ENCODE measurements at regions of chr20 and their contacts with region 1.

Region 1: DNA sequence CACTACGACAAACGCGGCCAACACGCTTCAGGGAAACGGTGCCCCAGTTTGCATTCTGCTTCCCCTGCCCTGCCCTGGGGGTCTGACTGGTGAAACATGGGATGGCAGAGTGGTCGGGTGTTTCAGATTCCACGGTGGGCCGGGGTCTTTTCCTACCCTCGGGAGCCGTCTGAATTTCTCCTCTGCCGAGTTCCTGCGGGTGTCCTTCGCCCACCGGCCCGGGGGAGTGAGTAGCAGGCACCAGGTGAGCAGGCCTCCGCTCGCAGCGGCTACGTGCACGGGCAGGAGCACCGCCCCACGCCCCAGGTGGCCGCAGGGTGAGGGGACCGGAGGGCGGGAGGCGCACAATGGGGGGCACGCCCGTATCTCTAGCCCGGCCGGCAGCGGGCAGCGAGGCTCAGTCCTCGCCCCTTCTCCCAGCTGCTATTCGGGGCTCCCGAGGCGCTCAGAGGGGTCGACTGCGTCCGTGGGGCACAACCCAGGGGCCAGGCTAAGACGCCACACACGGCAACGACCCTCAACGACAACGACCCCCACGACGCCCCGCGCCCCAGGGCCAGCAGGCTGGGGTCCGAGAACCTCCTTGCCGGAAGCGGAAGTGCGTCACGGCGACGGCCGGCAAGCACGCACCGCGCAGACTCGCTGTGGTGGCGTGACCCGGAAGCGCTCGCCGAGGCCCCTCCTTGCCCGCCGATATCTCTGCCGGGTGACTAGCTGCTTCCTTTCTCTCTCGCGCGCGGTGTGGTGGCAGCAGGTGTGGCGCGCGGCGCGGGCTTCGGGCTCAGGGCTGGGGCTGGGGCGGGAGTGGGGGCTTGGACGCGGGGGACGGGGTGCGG is at the start of gene RPS21:
- DNase-seq: peak; percentile 91
- ATAC-seq: peak; percentile 82
- H3K4me3 ChIP-seq: peak within 1 kb of the TSS; percentile 100
- H3K27ac ChIP-seq: peak within 1 kb of the TSS; percentile 75
- H3K4me1 ChIP-seq: peaks cover 18% of the 10 kb centered on the region
- H3K27me3 ChIP-seq: no peaks in the 10 kb centered on the region
- CTCF ChIP-seq: no peak
- total RNA-seq, gene RPS21: 1,250 and 1,945 TPM in 2 replicates

Region 2: DNA sequence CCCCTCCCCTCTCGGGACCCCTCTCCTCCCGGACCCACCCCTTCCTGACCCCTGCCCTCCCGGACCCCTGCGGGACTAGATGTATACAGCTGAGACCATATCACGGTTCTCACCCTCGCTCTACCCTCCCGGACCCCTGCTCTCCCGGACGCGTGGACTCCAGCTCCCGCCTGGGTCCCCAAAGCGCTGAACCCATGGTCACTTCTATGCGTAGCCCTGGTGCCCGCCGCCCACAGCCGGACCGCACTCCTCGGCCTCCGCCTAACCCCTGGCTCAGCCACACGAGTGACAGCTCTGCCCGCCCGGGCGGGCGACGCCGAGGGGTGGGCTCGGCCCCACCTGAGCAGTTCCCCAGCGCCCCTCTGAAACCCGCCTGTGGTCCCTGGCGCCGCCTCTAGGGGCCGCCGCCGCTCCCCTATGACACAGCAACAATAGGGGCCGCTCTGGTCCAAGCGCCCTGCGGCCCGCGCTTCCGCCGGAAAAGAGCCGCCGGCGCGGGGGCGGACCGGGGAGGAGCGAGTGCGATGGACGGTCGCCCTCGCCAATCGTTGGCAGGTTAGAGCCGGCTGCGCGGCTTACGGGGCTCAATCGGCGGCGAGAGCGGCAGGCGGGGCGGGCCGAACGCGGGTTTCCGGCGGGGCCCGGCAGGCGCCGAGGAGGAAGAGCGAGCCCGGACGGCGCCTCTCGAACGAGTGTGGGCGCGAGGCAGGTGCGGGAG is 84.1 kb before region 1 on chr20 and contains the start of gene ADRM1:
- CTCF ChIA-PET with region 1: interaction called, 9 read pairs
- POLR2A ChIA-PET with region 1: interaction called, 8 read pairs
- intact Hi-C with region 1: loop called (anchors 1 kb)
- DNase-seq: peak; percentile 99
- ATAC-seq: peak; percentile 54
- H3K4me3 ChIP-seq: peak within 1 kb of the TSS; percentile 94
- H3K27ac ChIP-seq: peak within 1 kb of the TSS; percentile 95
- H3K4me1 ChIP-seq: peaks cover 25% of the 10 kb centered on the region
- H3K27me3 ChIP-seq: no peaks in the 10 kb centered on the region
- CTCF ChIP-seq: peak; percentile 89
- total RNA-seq, gene ADRM1: 374 and 487 TPM in 2 replicates

Region 3: DNA sequence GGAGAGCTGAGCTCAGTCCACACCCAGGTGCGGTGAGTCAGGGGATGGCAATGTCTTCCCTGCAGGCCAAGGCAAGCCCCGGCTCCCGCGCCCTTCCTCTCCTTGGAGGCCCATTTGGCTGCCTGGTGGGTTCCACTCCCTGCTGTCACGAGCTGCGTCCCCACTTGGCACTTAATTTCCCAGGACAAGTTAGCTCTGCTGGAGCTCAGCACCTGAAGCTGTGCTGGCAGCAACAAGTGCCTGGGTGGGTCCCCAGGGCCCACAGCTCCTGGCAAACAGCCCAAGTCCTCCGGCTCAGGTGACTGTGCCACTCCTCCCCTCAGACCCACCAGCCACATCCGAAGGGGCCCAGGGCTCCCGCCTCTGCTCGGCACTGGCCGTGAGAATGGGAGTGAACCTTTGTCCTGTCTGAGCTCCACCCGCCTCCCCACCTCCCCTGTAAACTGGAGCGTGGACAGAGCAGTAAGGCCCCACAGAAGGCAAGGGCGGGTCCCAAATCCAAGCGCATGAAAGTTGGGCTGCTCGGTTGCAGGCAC is 36.4 kb before region 1 on chr20:
- CTCF ChIA-PET with region 1: interaction called, 12 read pairs
- POLR2A ChIA-PET with region 1: interaction called, 13 read pairs
- intact Hi-C with region 1: loop called (anchors 1 kb)
- DNase-seq: peak; percentile 96
- ATAC-seq: peak; percentile 83
- H3K4me3 ChIP-seq: no peak overlapping the region
- H3K27ac ChIP-seq: peak overlapping the region; percentile 97
- H3K4me1 ChIP-seq: peaks cover 45% of the 10 kb centered on the region
- H3K27me3 ChIP-seq: no peaks in the 10 kb centered on the region
- CTCF ChIP-seq: no peak

Region 4: DNA sequence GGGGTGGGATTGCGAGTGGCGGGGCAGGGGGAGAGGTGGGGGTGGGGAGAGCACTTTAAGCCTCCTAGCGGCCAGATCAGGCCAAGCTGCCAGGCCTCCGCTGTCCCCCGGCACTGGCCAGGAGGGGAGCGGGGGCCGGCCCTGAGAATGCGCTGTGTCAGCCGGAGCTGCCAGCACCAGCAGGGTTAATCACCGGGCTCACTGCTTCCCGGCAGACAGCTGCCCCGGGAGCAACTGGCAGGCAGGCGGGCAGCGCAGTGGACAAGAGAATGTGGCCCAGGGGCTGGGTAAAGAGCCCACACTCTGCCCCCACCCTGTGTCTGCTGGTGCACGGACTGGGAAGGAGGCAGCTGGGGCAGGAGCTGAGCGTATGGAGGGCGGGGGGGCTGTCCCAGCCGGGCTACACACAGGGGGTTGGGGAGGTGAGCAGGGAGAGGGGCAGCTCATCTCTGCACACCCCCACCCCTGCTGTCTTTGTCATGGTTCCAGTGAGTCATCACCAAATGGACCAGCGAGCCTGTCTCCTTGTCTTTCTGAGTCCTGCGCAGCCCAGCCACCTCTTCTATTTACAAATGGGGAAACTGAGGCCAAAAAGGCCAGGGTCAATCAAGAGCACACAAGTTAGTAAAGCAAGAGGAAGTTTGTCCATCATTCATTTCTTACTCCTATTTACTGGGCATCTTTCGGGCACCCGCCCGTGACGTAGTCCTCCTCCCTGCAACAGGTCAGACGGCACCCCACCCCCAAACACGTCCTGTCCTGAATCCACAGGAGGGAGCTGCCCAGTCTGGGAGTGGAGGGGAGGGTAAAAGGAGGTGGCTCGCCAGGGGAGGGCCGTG is 17.4 kb before region 1 on chr20:
- CTCF ChIA-PET with region 1: interaction called, 18 read pairs
- POLR2A ChIA-PET with region 1: no interaction called
- intact Hi-C with region 1: no loop called
- DNase-seq: peak; percentile 61
- ATAC-seq: peak; percentile 12
- H3K4me3 ChIP-seq: peak overlapping the region; percentile 55
- H3K27ac ChIP-seq: peak overlapping the region; percentile 58
- H3K4me1 ChIP-seq: peaks cover 51% of the 10 kb centered on the region
- H3K27me3 ChIP-seq: no peaks in the 10 kb centered on the region
- CTCF ChIP-seq: peak; percentile 40; the same call in 1 of the 2 replicates

Region 5: DNA sequence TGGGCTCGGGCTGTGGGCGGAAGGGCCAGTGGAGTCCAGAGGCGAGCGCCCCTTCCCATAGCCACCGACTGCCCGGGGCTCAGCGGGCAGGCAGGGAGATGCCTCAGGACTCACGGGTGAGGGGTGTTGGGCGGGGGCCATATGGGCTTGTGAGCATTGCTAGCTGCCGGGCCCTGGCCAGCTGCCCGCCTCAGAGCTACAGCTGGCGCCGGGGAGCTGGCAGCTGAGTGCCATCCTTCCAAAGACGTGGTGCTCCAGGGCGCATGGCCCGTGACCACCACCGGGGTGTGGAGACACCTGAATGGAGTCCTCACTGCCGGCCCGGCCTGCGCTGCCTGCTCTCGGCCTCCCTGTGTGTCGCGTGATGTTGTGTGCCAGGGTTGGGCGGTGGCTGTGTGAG is 51.3 kb after region 1 on chr20:
- CTCF ChIA-PET with region 1: no interaction called
- POLR2A ChIA-PET with region 1: no interaction called
- intact Hi-C with region 1: no loop called
- DNase-seq: no peak
- ATAC-seq: no peak
- H3K4me3 ChIP-seq: no peak overlapping the region
- H3K27ac ChIP-seq: no peak overlapping the region
- H3K4me1 ChIP-seq: no peaks in the 10 kb centered on the region
- H3K27me3 ChIP-seq: peaks cover 12% of the 10 kb centered on the region; the same call in 1 of the 2 replicates
- CTCF ChIP-seq: no peak

Region 6: DNA sequence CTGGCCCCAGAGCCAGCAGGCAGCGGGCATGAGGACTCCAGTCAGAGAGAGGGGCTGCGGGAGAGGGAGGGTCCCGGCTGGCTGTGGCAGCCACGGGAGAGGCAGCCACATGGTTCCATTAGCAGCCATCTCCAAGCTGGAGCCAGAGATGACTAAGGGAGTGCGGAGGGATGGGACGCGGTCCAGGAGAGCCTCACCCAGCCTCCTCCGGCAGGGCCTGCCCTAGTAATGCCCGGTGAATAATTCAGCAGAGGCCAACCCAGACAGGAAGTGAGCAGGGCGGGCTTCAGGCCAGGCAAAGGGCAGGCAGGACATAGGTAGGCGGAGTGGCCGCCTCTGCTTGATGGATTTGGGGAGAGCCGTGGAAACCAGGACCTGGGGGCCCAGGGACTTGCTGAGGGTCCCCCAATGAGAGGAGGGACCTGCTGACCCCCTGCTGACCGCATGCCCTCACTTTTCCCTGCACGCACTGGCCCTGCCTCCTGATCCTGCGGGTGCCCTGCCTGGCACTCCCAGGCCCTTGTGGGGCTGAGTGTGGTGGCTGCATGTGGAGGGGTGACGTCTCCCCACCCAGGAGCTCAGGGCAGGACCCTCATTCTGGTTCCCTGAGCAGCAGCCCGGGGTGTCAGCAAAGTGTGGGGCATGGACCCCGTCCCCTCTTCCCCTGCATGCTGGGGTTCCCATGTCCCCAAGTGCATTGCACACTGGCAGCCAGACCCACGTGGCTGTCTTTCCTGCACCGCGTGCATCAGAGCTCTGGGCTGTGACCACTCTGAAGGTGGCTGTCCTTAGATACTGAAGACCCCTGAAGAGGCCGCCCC is 203.9 kb after region 1 on chr20:
- CTCF ChIA-PET with region 1: no interaction called
- POLR2A ChIA-PET with region 1: interaction called, 23 read pairs
- intact Hi-C with region 1: no loop called
- DNase-seq: peak; percentile 94
- ATAC-seq: peak; percentile 88
- H3K4me3 ChIP-seq: no peak overlapping the region
- H3K27ac ChIP-seq: peak overlapping the region; percentile 85
- H3K4me1 ChIP-seq: peaks cover 39% of the 10 kb centered on the region
- H3K27me3 ChIP-seq: no peaks in the 10 kb centered on the region
- CTCF ChIP-seq: no peak

Measured in PC-3 (cell line).